ENCODE measurements at regions of chr17 and their contacts with region 1.

Region 1: GRCh38 chr17:68057531-68057952 is 22.0 kb downstream of the KPNA2 start:
- DNase-seq: peak; percentile 75
- ATAC-seq: peak; percentile 79
- H3K4me3 Mint-ChIP-seq: no peak overlapping the region
- H3K27ac Mint-ChIP-seq: no peak overlapping the region
- H3K4me1 Mint-ChIP-seq: peaks cover 7% of the 10 kb centered on the region
- H3K27me3 Mint-ChIP-seq: peaks cover 6% of the 10 kb centered on the region

Region 2: DNA sequence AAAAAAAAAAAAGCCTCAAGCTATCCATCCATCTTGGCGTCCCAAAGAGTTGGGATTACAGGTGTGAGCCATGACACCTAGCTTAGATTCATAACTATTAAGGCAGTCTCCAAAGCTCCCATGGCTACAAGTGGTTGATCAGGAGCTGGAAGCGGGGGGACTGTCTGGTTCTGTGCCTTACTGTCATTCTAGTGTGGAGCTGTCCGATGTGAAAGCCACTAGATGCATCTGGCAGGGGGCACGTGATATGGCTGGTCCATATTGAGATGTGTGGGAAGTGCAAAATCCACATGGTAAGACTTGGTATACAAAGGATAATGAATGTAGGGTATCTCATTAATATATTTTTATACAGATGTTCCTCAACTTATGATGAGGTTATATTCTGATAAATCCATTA is 16.7 kb after region 1 on chr17:
- CTCF ChIA-PET with region 1: interaction called, 11 read pairs
- DNase-seq: no peak
- ATAC-seq: no peak
- H3K4me3 Mint-ChIP-seq: no peak overlapping the region
- H3K27ac Mint-ChIP-seq: no peak overlapping the region
- H3K4me1 Mint-ChIP-seq: no peaks in the 10 kb centered on the region
- H3K27me3 Mint-ChIP-seq: no peaks in the 10 kb centered on the region